IMR-90 (cell line): ENCODE measurements at regions of chr6 and their contacts with region 1.

Region 1: GRCh38 chr6:105601541-105602236 is 198.8 kb upstream of the PREP start:
- DNase-seq: peak; percentile 100
- ATAC-seq: peak; percentile 92
- H3K4me3 ChIP-seq: peak overlapping the region; percentile 22; the same call in 1 of the 2 replicates
- H3K27ac ChIP-seq: peak overlapping the region; percentile 88
- H3K4me1 ChIP-seq: peaks cover 17% of the 10 kb centered on the region
- H3K27me3 ChIP-seq: no peaks in the 10 kb centered on the region
- CTCF ChIP-seq: no peak
- POLR2A ChIP-seq: peak; percentile 83; the same call in 1 of the 2 replicates
- RAD21 ChIP-seq: peak; percentile 31; the same call in 1 of the 2 replicates

Region 2: DNA sequence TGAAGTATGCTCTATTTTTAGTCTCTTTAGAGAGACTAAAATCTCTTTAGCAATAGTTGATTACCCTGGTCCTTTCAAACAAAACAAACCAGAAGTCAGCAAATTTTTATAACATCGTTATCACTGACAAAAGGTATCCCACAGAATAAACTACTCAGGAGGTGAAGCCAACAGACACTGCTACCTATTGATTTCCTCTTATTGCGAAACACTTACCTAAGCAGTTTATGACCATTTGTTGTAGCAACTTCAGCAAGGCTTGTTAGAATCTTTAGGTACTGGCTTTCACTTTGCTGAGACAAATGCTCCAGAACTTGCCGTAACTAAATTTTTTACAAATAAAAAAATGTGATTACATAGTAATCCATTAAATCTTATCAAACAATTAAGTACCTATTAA is 806.3 kb before region 1 on chr6:
- CTCF ChIA-PET with region 1: no interaction called
- POLR2A ChIA-PET with region 1: no interaction called
- dilution Hi-C with region 1: no loop called
- in situ Hi-C with region 1: no loop called
- intact Hi-C with region 1: no loop called
- DNase-seq: no peak
- ATAC-seq: no peak
- H3K4me3 ChIP-seq: no peak overlapping the region
- H3K27ac ChIP-seq: no peak overlapping the region
- H3K4me1 ChIP-seq: peaks cover 2% of the 10 kb centered on the region
- H3K27me3 ChIP-seq: no peaks in the 10 kb centered on the region
- CTCF ChIP-seq: no peak
- POLR2A ChIP-seq: no peak
- RAD21 ChIP-seq: no peak

Region 3: DNA sequence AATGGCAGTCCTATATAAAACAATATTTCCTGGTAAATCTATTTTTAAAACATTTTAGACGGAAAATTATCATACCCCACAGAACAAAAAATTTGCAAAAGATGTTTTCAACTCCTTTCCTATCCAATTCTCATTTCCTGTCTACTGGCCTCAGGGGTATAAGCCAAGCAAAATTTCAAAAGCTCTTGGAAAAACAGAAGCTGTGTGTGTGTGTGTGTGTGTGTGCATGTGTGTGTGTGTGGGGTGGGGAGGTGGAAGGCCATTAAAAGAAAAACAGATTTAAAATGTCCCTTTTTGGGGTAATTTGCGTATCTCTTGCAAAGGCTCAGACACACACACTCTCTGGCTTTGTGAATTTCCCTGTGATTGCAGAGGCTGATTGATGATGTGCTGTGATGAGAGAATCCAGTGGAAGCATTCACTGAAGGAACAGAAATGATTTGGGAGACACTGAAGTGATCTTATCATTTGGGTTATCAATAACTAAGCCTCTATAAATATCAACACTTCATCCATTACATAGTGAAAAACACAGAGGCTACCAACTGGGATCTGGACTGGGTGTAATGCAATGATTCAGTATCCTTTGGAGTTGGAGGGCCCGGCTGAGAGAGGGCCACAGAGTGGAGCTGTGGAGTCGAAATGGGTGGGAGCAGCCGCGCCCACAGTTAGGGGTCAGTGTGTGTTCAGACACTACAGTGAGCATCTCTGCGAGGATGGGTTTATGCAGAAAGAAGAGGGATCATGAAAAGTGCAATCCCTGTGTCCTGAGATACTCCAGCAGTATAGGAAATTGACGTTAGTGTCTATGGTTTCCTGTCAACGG is 92.0 kb before region 1 on chr6:
- CTCF ChIA-PET with region 1: no interaction called
- POLR2A ChIA-PET with region 1: no interaction called
- dilution Hi-C with region 1: no loop called
- in situ Hi-C with region 1: no loop called
- intact Hi-C with region 1: loop called (anchors 2 kb)
- DNase-seq: peak; percentile 56
- ATAC-seq: peak; percentile 91
- H3K4me3 ChIP-seq: no peak overlapping the region
- H3K27ac ChIP-seq: no peak overlapping the region
- H3K4me1 ChIP-seq: peaks cover 1% of the 10 kb centered on the region; the same call in 1 of the 2 replicates
- H3K27me3 ChIP-seq: no peaks in the 10 kb centered on the region
- CTCF ChIP-seq: peak; percentile 55
- POLR2A ChIP-seq: no peak
- RAD21 ChIP-seq: peak; percentile 53

Region 4: DNA sequence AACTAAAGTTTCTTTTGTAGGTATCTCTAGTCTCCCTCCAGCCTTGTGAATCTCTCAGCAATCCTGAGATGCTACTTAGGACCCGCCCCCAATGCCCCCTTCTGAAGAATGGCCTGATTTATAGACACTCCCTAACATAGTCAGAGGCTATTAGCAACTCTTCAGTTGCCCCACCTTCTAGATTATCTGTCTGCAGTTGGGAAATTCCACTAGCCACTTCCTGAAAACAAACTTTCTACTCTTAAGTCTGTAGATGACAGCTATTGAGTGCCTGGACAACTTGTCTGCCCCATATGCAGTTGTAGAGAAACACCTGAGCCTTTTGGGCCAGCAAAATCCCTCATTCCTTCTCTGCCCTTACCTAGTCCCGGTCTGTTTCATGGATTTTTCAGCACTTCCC is 10.6 kb before region 1 on chr6:
- CTCF ChIA-PET with region 1: interaction called, 3 read pairs
- POLR2A ChIA-PET with region 1: interaction called, 15 read pairs
- dilution Hi-C with region 1: no loop called
- in situ Hi-C with region 1: no loop called
- intact Hi-C with region 1: no loop called
- DNase-seq: peak; percentile 57
- ATAC-seq: no peak
- H3K4me3 ChIP-seq: no peak overlapping the region
- H3K27ac ChIP-seq: no peak overlapping the region
- H3K4me1 ChIP-seq: peaks cover 15% of the 10 kb centered on the region; the same call in 1 of the 2 replicates
- H3K27me3 ChIP-seq: no peaks in the 10 kb centered on the region
- CTCF ChIP-seq: no peak
- POLR2A ChIP-seq: no peak
- RAD21 ChIP-seq: no peak

Region 5: GRCh38 chr6:105726907-105727655 is 125.4 kb after region 1 on chr6:
- CTCF ChIA-PET with region 1: no interaction called
- POLR2A ChIA-PET with region 1: no interaction called
- dilution Hi-C with region 1: no loop called
- in situ Hi-C with region 1: no loop called
- intact Hi-C with region 1: loop called (anchors 5 kb)
- DNase-seq: peak; percentile 66
- ATAC-seq: peak; percentile 60; the same call in 1 of the 2 replicates
- H3K4me3 ChIP-seq: no peak overlapping the region
- H3K27ac ChIP-seq: no peak overlapping the region
- H3K4me1 ChIP-seq: peaks cover 4% of the 10 kb centered on the region; the same call in 1 of the 2 replicates
- H3K27me3 ChIP-seq: no peaks in the 10 kb centered on the region
- CTCF ChIP-seq: no peak
- POLR2A ChIP-seq: no peak
- RAD21 ChIP-seq: no peak

Region 6: GRCh38 chr6:106300944-106301343 is 699.3 kb after region 1 on chr6:
- CTCF ChIA-PET with region 1: no interaction called
- POLR2A ChIA-PET with region 1: no interaction called
- dilution Hi-C with region 1: no loop called
- in situ Hi-C with region 1: no loop called
- intact Hi-C with region 1: loop called (anchors 10 kb)
- DNase-seq: peak; percentile 65
- ATAC-seq: peak; percentile 79
- H3K4me3 ChIP-seq: no peak overlapping the region
- H3K27ac ChIP-seq: no peak overlapping the region
- H3K4me1 ChIP-seq: no peaks in the 10 kb centered on the region
- H3K27me3 ChIP-seq: no peaks in the 10 kb centered on the region
- CTCF ChIP-seq: peak; percentile 69
- POLR2A ChIP-seq: no peak
- RAD21 ChIP-seq: peak; percentile 71